ENCODE measurements at regions of chr12 and their contacts with region 1.

Region 1: GRCh38 chr12:48175613-48176416 is 7.6 kb upstream of the CCDC184 start:
- DNase-seq: no peak
- H3K4me3 ChIP-seq: peak overlapping the region in 2 of 7 experiments; percentile 39 to 42
- H3K27ac ChIP-seq: no peak overlapping the region
- H3K4me1 ChIP-seq: peaks cover 0 to 6% (median 1%) of the 10 kb centered on the region in 4 experiments
- H3K27me3 ChIP-seq: peaks cover 0 to 5% (median 1%) of the 10 kb centered on the region in 5 experiments

Region 2: GRCh38 chr12:47812797-47813510 is 362.9 kb before region 1 on chr12:
- CTCF ChIA-PET with region 1: no interaction called
- POLR2A ChIA-PET with region 1: no interaction called
- DNase-seq: peak; percentile 91 to 98 (median 97)
- H3K4me3 ChIP-seq: peak overlapping the region in 6 of 7 experiments; percentile 35 to 74 (median 58)
- H3K27ac ChIP-seq: peak overlapping the region; percentile 59 to 88
- H3K4me1 ChIP-seq: peaks cover 45 to 98% (median 97%) of the 10 kb centered on the region in 4 experiments
- H3K27me3 ChIP-seq: no peaks in the 10 kb centered on the region

Region 3: GRCh38 chr12:47963340-47964040 is 212.3 kb before region 1 on chr12 and contains the start of gene TMEM106C:
- CTCF ChIA-PET with region 1: no interaction called
- POLR2A ChIA-PET with region 1: no interaction called
- DNase-seq: peak; percentile 89 to 95 (median 91)
- H3K4me3 ChIP-seq: peak within 1 kb of the TSS; percentile 55 to 96 (median 86)
- H3K27ac ChIP-seq: peak within 1 kb of the TSS in 1 of 2 experiments; percentile 51
- H3K4me1 ChIP-seq: peaks cover 0 to 15% (median 9%) of the 10 kb centered on the region in 4 experiments
- H3K27me3 ChIP-seq: peaks cover 0 to 9% (median 3%) of the 10 kb centered on the region in 5 experiments

Region 4: GRCh38 chr12:48189331-48190125 is 13.7 kb after region 1 on chr12:
- CTCF ChIA-PET with region 1: interaction called, 14 read pairs
- POLR2A ChIA-PET with region 1: no interaction called
- DNase-seq: peak; percentile 76 to 87 (median 78)
- H3K4me3 ChIP-seq: no peak overlapping the region
- H3K27ac ChIP-seq: no peak overlapping the region
- H3K4me1 ChIP-seq: peaks cover 0 to 7% (median 3%) of the 10 kb centered on the region in 4 experiments
- H3K27me3 ChIP-seq: peaks cover 0 to 16% (median 15%) of the 10 kb centered on the region in 5 experiments

Region 5: GRCh38 chr12:48199774-48200221 is 24.0 kb after region 1 on chr12:
- CTCF ChIA-PET with region 1: no interaction called
- POLR2A ChIA-PET with region 1: no interaction called
- DNase-seq: peak in 2 of 3 donors; percentile 39 to 54
- H3K4me3 ChIP-seq: peak overlapping the region in 6 of 7 experiments; percentile 36 to 99 (median 89)
- H3K27ac ChIP-seq: peak overlapping the region; percentile 41 to 98
- H3K4me1 ChIP-seq: peaks cover 9 to 35% (median 34%) of the 10 kb centered on the region in 4 experiments
- H3K27me3 ChIP-seq: no peaks in the 10 kb centered on the region

Measured in common myeloid progenitor, CD34-positive (primary cell).